ENCODE measurements at regions of chr1 and their contacts with region 1.

Region 1: GRCh38 chr1:228073857-228074545 is 8.5 kb upstream of the ARF1 start:
- DNase-seq: no peak
- H3K4me3 ChIP-seq: no peak overlapping the region
- CTCF ChIP-seq: no peak

Region 2: GRCh38 chr1:227999056-227999930 is 74.7 kb before region 1 on chr1:
- CTCF ChIA-PET with region 1: interaction called, 12 read pairs
- POLR2A ChIA-PET with region 1: no interaction called
- DNase-seq: no peak
- H3K4me3 ChIP-seq: no peak overlapping the region
- CTCF ChIP-seq: peak; percentile 86

Measured in AG04449 (cell line).